Motor neuron (in vitro differentiated cells): ENCODE measurements at regions of chr2 and their contacts with region 1.

Region 1: DNA sequence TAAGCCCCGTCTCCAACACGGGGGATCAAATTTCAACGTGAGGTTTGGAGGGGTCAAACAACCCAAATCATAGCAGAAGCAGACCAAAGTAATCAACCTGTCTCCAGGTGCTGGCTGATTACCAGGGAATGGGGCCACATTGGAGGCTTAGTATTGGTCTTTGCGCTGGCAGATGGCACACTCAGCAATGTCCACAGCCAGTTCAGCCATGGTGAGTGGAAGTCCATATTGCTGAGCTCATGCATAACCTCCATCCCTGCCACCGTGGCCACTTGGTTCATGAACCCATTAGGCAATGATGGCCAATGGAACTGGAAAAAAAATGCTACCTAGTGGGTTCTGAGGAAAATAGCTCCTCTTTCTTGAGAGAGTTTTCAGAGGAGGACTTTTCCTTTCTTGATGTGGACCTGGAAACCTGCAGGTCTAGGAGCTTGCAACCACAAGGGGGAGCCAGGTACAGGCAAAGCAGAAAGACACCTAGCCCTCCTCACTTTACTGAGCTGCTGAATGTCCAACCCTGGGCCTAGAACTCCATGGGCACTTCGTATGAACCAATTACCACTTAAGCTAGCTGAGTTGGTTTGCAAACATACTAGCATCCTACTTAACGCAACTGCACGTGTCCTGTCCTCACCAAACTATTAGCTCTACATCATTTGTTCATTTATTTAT is 128.0 kb upstream of the GYPC start:
- ATAC-seq: peak in 3 of 8 experiments; percentile 89 to 92 (median 90)
- H3K4me3 ChIP-seq: no peak overlapping the region
- H3K27ac ChIP-seq: no peak overlapping the region
- H3K4me1 ChIP-seq: no peaks in the 10 kb centered on the region

Region 2: DNA sequence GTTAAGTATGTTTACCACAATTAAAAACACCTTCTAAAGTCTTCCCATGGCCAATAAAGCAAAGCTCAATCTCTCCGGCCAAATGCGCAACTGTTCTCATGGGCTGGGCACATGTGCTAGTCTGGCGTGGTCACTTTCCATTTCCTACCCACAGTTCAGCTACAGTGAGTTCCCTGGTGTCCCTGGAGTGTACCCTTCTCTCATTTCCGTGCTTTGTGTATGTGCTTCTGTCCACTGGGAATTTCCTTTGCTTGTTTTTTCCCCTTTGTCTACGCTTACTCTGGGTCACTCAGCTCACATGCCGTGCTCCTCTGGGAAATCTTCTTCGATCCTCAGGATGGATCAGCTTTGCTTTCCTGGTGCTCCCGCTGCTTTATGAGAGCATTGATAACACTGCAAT is 58.3 kb after region 1 on chr2:
- in situ Hi-C with region 1: no loop called
- ATAC-seq: peak in 4 of 8 experiments; percentile 16 to 95 (median 62)
- H3K4me3 ChIP-seq: no peak overlapping the region
- H3K27ac ChIP-seq: no peak overlapping the region
- H3K4me1 ChIP-seq: no peaks in the 10 kb centered on the region

Region 3: GRCh38 chr2:126627643-126628042 is 99.7 kb after region 1 on chr2:
- in situ Hi-C with region 1: no loop called
- ATAC-seq: peak in 2 of 8 experiments; percentile 42 to 46
- H3K4me3 ChIP-seq: no peak overlapping the region
- H3K27ac ChIP-seq: no peak overlapping the region
- H3K4me1 ChIP-seq: no peaks in the 10 kb centered on the region

Region 4: GRCh38 chr2:126657636-126658318 is 129.8 kb after region 1 on chr2:
- in situ Hi-C with region 1: loop called in 1 of 9 experiments (anchors 25 kb)
- ATAC-seq: peak; percentile 56 to 88 (median 82)
- H3K4me3 ChIP-seq: peak overlapping the region in 4 of 5 donors; percentile 25 to 51 (median 38)
- H3K27ac ChIP-seq: peak overlapping the region; percentile 90 to 95
- H3K4me1 ChIP-seq: peaks cover 51 to 53% of the 10 kb centered on the region in 2 donors